Right cardiac atrium (tissue), 5 donors: ENCODE measurements at regions of chr12 and their contacts with region 1.

Region 1: GRCh38 chr12:30308011-30308705 is 387.5 kb downstream of the IPO8 start:
- DNase-seq: no peak
- ATAC-seq: no peak
- H3K4me3 ChIP-seq: no peak overlapping the region
- H3K27ac ChIP-seq: no peak overlapping the region
- H3K4me1 ChIP-seq: no peaks in the 10 kb centered on the region
- H3K27me3 ChIP-seq: no peaks in the 10 kb centered on the region

Region 2: DNA sequence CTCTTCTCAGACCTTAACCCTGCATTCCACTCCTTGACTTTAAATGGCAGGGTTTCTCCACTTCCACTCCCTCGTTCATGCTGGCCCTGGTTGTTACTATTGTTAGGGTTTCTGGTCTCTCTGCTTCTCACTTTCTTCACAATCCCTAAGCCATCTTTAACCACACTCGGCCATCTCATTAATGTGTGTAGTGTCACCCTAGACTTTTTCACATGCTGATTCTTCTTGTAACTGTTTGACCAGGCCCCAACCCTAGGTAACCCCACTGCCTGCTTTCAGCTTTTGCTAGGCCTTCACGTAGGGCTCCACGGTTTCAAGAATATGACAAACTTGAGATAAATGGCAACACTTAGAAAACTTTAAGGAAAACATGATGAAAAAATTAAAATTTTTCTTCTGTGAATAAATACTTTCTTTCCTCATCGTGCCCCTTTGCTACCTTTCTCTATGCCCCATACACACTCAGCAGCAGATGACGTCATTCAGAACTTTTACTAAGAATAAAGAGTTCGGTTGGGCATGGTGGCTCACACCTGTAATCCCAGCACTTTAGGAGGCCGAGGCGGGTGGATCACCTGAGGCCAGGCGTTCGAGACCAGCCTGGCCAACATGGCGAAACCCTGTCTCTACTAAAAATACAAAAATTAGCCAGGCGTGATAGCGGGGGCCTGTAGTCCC is 192.5 kb after region 1 on chr12:
- intact Hi-C with region 1: no loop called
- DNase-seq: no peak
- ATAC-seq: no peak
- H3K4me3 ChIP-seq: no peak overlapping the region
- H3K27ac ChIP-seq: no peak overlapping the region
- H3K4me1 ChIP-seq: peaks cover 3% of the 10 kb centered on the region
- H3K27me3 ChIP-seq: no peaks in the 10 kb centered on the region

Region 3: DNA sequence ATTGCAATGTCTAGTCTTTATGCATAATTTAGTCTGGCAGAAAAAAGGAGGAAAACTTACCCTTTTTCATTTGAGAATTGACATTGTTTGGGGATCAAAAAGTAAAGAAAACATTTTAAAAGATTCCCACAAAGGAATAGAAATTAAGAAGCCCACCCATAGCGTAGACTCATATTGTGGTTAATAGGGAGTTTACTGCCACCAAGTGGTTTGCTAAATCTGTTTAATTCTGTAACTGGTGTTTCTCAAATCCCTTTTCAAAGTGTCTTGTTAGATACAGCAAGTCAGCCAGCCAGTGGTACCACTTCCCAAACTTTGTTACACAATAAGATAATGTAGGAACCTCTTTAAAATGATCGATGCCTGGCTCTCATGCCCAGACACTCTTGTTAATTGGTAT is 207.2 kb after region 1 on chr12:
- intact Hi-C with region 1: loop called in 1 of 4 experiments (anchors 10 kb)
- DNase-seq: no peak
- ATAC-seq: no peak
- H3K4me3 ChIP-seq: no peak overlapping the region
- H3K27ac ChIP-seq: no peak overlapping the region
- H3K4me1 ChIP-seq: no peaks in the 10 kb centered on the region
- H3K27me3 ChIP-seq: no peaks in the 10 kb centered on the region

Region 4: GRCh38 chr12:30570211-30570890 is 262.2 kb after region 1 on chr12:
- intact Hi-C with region 1: no loop called
- DNase-seq: no peak
- ATAC-seq: no peak
- H3K4me3 ChIP-seq: no peak overlapping the region
- H3K27ac ChIP-seq: no peak overlapping the region
- H3K4me1 ChIP-seq: no peaks in the 10 kb centered on the region
- H3K27me3 ChIP-seq: no peaks in the 10 kb centered on the region